Activated B cell treated with CpG ODN at 0.5 μM for 24 hours (primary cell): ENCODE measurements at regions of chr15 and their contacts with region 1.

Region 1: DNA sequence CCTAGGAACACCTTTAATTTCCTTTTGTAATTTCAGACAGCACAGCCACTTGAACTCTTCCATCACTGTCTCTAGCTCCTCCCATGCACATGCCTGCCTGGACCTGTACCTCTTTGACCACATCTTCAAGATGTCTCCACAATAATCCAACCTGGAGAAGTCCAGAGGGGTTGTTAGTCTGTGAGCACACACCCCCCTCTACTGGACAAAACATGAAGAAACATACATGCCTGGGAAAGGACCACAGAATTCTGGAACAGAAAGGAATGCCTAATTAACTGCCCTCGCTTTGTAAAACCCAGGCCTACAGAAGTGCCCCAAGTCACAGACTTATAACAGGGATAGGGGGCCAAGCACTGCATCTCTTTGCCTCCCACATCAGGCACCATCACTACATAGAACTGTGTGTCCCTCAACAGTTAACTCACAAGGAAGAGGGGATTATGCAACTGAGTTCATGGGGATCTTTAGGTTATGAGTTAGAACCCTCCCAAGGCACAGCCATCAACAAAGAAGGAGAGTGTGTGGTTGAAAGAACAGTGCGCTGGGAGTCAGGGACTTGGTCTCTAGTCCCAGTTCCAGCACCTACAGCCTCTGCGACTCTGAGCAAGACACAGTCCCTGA is 61.7 kb downstream of the FMN1 start:
- DNase-seq: no peak
- ATAC-seq: no peak
- H3K4me3 Mint-ChIP-seq: no peak overlapping the region
- H3K27ac Mint-ChIP-seq: no peak overlapping the region
- H3K4me1 Mint-ChIP-seq: no peaks in the 10 kb centered on the region
- H3K27me3 Mint-ChIP-seq: peaks cover 11% of the 10 kb centered on the region
- CTCF ChIP-seq: no peak

Region 2: GRCh38 chr15:32664796-32665195 is 468.0 kb before region 1 on chr15:
- CTCF ChIA-PET with region 1: interaction called, 11 read pairs
- POLR2A ChIA-PET with region 1: no interaction called
- intact Hi-C with region 1: no loop called
- DNase-seq: no peak
- ATAC-seq: no peak
- H3K4me3 Mint-ChIP-seq: no peak overlapping the region
- H3K27ac Mint-ChIP-seq: no peak overlapping the region
- H3K4me1 Mint-ChIP-seq: no peaks in the 10 kb centered on the region
- H3K27me3 Mint-ChIP-seq: no peaks in the 10 kb centered on the region
- CTCF ChIP-seq: no peak

Region 3: DNA sequence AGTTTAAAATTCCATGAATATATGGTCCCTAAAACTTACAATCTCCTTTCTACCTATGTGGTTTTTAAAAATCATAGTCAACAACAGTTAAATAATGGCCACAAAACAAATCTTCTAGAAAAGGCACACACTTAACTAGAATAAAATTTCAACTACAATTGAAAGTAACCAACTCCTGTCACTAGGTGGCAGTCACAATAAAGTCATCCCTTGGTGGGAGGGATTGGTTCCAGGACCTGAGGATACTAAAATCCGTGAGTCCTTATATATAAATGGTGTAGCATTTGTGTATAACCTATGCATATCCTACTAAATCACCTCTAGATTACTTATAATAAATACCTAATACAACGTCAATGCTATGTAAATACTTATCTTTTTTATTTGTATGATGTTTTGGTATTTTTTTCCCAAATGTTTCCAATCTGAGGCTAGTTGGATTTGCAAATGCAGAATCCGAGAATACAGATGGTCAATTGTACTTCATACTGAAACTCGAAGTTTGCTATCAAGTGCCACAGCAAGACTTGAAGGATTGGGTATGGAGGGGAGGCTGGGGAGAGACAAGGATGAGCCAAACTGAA is 110.9 kb before region 1 on chr15:
- CTCF ChIA-PET with region 1: no interaction called
- POLR2A ChIA-PET with region 1: no interaction called
- intact Hi-C with region 1: loop called (anchors 2 kb)
- DNase-seq: no peak
- ATAC-seq: no peak
- H3K4me3 Mint-ChIP-seq: no peak overlapping the region
- H3K27ac Mint-ChIP-seq: no peak overlapping the region
- H3K4me1 Mint-ChIP-seq: no peaks in the 10 kb centered on the region
- H3K27me3 Mint-ChIP-seq: peaks cover 10% of the 10 kb centered on the region
- CTCF ChIP-seq: no peak

Region 4: GRCh38 chr15:33119273-33119672 is 13.6 kb before region 1 on chr15:
- CTCF ChIA-PET with region 1: no interaction called
- POLR2A ChIA-PET with region 1: no interaction called
- intact Hi-C with region 1: no loop called
- DNase-seq: no peak
- ATAC-seq: no peak
- H3K4me3 Mint-ChIP-seq: no peak overlapping the region
- H3K27ac Mint-ChIP-seq: no peak overlapping the region
- H3K4me1 Mint-ChIP-seq: no peaks in the 10 kb centered on the region
- H3K27me3 Mint-ChIP-seq: no peaks in the 10 kb centered on the region
- CTCF ChIP-seq: no peak